ENCODE measurements at regions of chr4 and their contacts with region 1.

Region 1: DNA sequence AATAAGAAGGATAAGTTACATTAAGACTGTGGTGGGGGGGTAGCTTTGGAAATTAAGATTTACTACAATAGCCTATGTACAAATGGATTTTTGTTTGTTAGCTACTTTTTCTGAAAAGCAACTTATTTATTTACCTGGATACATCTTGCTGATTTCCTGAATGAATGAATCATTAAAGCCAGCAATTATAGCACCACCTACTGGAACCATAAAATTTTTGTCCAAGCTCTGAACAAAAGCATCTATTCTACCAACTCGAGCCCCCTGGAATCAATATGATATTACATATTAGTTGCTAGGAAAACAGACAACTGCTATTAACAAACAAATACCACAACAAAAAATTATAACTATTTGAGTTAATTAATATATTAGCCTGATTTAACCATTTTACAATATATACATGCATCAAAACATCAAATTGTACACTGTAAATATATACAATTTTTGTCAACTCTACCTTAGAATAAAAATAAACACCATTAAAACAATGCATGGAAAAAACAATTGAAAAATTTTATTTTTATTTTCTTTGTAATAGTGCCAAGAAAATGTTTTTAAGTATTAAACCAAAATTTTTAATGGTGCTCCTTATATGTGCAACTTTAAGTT is 15.3 kb downstream of the SEPSECS start:
- DNase-seq: no peak
- ATAC-seq: no peak
- H3K4me3 ChIP-seq: no peak overlapping the region
- H3K27ac ChIP-seq: no peak overlapping the region
- H3K4me1 ChIP-seq: peaks cover 0 to 6% (median 0%) of the 10 kb centered on the region in 12 donors
- H3K27me3 ChIP-seq: no peaks in the 10 kb centered on the region
- CTCF ChIP-seq: peak; percentile 28 to 75 (median 62)
- POLR2A ChIP-seq: no peak

Region 2: GRCh38 chr4:25088093-25088952 is 56.7 kb before region 1 on chr4:
- intact Hi-C with region 1: loop called in 1 of 10 experiments (anchors 5 kb)
- DNase-seq: peak; percentile 63 to 84 (median 67)
- ATAC-seq: peak; percentile 86 to 94 (median 92)
- H3K4me3 ChIP-seq: peak overlapping the region in 11 of 12 donors; percentile 18 to 58 (median 43)
- H3K27ac ChIP-seq: peak overlapping the region in 11 of 12 donors; percentile 50 to 91 (median 77)
- H3K4me1 ChIP-seq: peaks cover 0 to 41% (median 23%) of the 10 kb centered on the region in 12 donors
- H3K27me3 ChIP-seq: peaks cover 0 to 16% (median 0%) of the 10 kb centered on the region in 9 donors
- CTCF ChIP-seq: no peak
- POLR2A ChIP-seq: no peak

Region 3: DNA sequence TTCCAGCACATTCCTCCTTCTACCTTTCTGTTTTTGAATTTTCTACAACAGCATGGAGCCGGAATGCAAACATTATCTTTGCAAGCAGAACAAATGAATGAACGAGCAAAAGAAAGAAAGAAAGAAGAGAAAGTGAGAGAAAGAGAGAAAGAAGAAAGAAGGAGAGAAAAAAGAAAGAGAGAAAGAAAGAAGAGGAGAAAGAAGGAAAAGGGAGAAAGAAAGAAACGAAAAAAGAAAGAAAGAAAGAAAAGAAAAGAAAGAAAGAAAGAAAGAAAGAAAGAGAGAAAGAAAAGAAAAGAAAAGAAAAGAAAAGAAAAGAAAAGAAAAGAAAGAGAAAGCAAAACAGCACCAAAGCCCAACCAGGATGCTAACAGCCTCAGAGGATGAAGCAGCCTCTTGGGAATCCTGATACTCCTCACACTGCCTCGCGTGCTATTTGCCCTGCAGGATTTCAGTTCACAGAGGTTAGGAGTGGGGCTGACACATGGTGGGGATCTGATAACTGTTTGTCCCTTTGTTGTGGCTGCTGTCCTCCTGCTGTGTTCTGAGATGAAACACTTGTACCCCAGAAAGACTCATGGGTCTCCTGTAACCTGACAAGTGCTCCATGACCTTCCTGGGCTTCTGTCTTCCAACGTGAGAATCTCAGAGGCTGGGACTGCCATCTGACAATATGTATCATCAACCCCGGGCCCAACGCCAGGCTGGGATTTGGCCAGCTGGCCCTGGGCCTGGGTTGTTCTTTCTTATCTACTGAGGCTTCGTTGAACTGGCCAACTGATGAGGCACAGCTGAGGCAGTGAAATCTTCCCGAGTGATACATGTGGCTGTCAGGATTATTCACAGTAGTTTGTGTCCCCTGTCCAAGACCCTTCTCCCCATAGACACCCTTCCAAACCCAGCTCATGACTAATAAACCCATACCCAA is 45.7 kb before region 1 on chr4:
- intact Hi-C with region 1: loop called in 1 of 10 experiments (anchors 5 kb)
- DNase-seq: peak; percentile 78 to 89 (median 87)
- ATAC-seq: peak; percentile 79 to 92 (median 90)
- H3K4me3 ChIP-seq: no peak overlapping the region
- H3K27ac ChIP-seq: peak overlapping the region; percentile 40 to 87 (median 79)
- H3K4me1 ChIP-seq: peaks cover 0 to 37% (median 26%) of the 10 kb centered on the region in 12 donors
- H3K27me3 ChIP-seq: no peaks in the 10 kb centered on the region
- CTCF ChIP-seq: no peak
- POLR2A ChIP-seq: no peak

Measured in heart left ventricle (tissue), 16 donors.